CD4-positive, alpha-beta memory T cell (primary cell): ENCODE measurements at regions of chr6 and their contacts with region 1.

Region 1: GRCh38 chr6:2634139-2634964 is 116.4 kb downstream of the MYLK4 start:
- DNase-seq: peak; percentile 65 to 77 (median 75)
- H3K4me3 ChIP-seq: peak overlapping the region in 1 of 2 donors; percentile 49
- H3K4me3 Mint-ChIP-seq: peak overlapping the region; percentile 43 to 85 (median 67)
- H3K27ac ChIP-seq: no peak overlapping the region
- H3K27ac Mint-ChIP-seq: peak overlapping the region in 1 of 7 donors; percentile 30
- H3K4me1 ChIP-seq: no peaks in the 10 kb centered on the region
- H3K4me1 Mint-ChIP-seq: peaks cover 0 to 6% (median 4%) of the 10 kb centered on the region in 4 donors
- H3K27me3 ChIP-seq: no peaks in the 10 kb centered on the region
- H3K27me3 Mint-ChIP-seq: peaks cover 11 to 21% of the 10 kb centered on the region in 2 donors

Region 2: DNA sequence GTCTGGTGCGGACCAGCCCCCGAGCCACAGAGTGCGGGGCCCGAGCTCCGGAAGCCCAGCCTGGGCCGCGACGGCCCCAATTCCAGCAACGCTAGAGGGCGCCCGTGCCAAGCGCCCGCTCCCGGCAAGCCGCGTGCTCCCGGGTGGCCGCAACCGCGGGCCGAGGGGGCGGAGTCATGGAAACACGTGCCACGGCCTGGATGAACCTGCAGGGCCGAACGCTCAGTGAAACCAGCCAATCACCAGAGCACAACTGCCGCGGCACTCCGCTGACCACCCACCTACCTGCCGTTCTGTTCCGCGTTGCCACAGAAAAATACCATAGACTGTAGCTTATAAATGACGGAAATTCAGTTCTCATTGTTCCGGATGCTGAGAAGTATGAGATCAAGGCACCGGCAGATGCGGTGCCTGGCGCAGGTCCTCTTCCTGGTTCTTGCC is 1110.3 kb before region 1 on chr6:
- CTCF ChIA-PET with region 1: interaction called, 16 read pairs
- POLR2A ChIA-PET with region 1: no interaction called
- intact Hi-C with region 1: no loop called
- DNase-seq: peak; percentile 75 to 83 (median 77)
- H3K4me3 ChIP-seq: peak overlapping the region in 1 of 2 donors; percentile 20
- H3K4me3 Mint-ChIP-seq: peak overlapping the region; percentile 75 to 83 (median 80)
- H3K27ac ChIP-seq: peak overlapping the region; percentile 36
- H3K27ac Mint-ChIP-seq: peak overlapping the region; percentile 78 to 93 (median 85)
- H3K4me1 ChIP-seq: peaks cover 51% of the 10 kb centered on the region
- H3K4me1 Mint-ChIP-seq: peaks cover 27 to 55% (median 49%) of the 10 kb centered on the region in 4 donors
- H3K27me3 ChIP-seq: no peaks in the 10 kb centered on the region
- H3K27me3 Mint-ChIP-seq: peaks cover 10% of the 10 kb centered on the region in 2 donors

Region 3: DNA sequence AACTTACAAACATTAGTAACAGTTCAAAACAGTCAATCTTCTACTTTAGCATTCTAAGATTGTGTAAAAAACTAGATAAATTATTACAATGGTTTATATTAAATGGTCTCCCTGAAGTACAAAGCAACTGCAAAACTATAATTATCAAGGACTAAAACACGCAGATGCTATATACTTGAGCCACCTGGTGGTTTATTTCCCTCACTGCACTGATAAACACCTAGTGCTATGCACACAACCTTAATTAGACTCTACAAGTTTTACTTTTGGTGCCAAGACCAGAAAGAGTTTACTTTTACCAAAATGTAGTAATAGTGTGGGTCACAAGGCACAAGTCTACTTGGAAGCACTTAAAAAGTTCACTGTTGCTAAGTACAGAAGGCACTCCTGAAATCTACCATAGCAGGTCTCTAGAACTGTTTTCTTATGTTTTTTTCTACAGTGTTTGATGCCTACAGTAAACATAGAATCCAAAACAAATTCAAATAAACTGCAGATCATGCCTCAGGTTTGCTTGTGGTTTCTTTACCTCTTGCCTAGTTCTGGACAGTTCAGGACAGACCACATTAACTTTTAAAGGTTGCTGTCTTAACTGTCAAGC is 438.2 kb before region 1 on chr6:
- CTCF ChIA-PET with region 1: interaction called, 4 read pairs
- POLR2A ChIA-PET with region 1: no interaction called
- intact Hi-C with region 1: loop called (anchors 1 kb)
- DNase-seq: peak in 4 of 5 donors; percentile 24 to 44 (median 37)
- H3K4me3 ChIP-seq: no peak overlapping the region
- H3K4me3 Mint-ChIP-seq: no peak overlapping the region
- H3K27ac ChIP-seq: no peak overlapping the region
- H3K27ac Mint-ChIP-seq: no peak overlapping the region
- H3K4me1 ChIP-seq: no peaks in the 10 kb centered on the region
- H3K4me1 Mint-ChIP-seq: peaks cover 0 to 2% (median 0%) of the 10 kb centered on the region in 4 donors
- H3K27me3 ChIP-seq: no peaks in the 10 kb centered on the region
- H3K27me3 Mint-ChIP-seq: no peaks in the 10 kb centered on the region

Region 4: DNA sequence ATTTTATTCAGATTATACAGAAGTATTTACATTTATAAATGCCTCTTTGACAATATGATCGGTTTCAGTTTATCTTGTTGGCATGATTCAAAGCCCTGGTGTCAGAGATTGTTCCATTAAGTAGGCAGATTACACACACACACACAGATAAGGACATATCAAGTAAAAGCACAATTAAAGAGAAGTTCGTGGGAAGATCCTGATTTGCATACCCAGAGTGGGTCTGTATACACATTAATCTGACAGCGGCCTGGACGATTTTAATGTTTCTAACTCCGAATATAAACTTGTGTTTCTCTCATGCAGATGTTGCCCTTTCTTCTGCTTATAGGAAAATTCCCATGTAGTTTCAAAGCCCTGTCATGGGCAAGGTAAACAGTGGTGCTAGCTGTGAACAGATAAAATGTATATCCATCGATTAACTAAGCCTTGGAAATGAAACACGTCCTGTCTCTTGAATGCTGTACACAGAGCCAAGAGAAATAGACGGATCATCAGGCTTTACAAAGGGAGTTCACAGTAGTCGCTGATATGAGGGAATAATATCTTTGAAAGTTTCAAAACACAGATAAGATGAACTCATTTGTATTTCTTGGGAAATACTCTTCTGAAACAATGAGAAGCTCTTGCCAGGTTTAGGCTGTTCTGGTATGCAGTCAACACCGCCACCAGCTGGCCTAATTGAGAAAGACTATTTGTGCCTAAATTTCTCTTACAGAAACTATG is 280.8 kb before region 1 on chr6:
- CTCF ChIA-PET with region 1: interaction called, 6 read pairs
- POLR2A ChIA-PET with region 1: no interaction called
- intact Hi-C with region 1: loop called (anchors 2 kb)
- DNase-seq: peak; percentile 26 to 41 (median 31)
- H3K4me3 ChIP-seq: no peak overlapping the region
- H3K4me3 Mint-ChIP-seq: no peak overlapping the region
- H3K27ac ChIP-seq: no peak overlapping the region
- H3K27ac Mint-ChIP-seq: no peak overlapping the region
- H3K4me1 ChIP-seq: no peaks in the 10 kb centered on the region
- H3K4me1 Mint-ChIP-seq: no peaks in the 10 kb centered on the region
- H3K27me3 ChIP-seq: no peaks in the 10 kb centered on the region
- H3K27me3 Mint-ChIP-seq: no peaks in the 10 kb centered on the region

Region 5: DNA sequence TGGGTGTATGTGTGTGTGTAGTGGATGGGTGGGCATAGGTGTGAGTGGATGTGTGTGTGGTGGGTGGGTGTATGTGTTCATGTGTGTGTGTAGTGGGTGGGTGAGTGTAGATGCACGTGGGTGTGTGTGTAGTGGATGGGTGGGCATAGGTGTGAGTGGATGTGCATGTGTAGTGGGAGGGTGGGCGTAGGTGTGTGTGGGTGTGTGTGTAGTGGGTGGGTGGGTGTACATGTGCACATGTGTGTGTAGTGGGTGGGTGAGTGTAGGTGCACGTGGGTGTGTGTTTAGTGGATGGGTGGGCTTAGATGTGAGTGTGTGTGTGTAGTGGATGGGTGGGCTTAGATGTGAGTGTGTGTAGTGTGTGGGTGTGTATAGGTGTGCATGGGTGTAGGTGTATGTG is 12.0 kb after region 1 on chr6:
- CTCF ChIA-PET with region 1: interaction called, 56 read pairs
- POLR2A ChIA-PET with region 1: no interaction called
- intact Hi-C with region 1: no loop called
- DNase-seq: no peak
- H3K4me3 ChIP-seq: no peak overlapping the region
- H3K4me3 Mint-ChIP-seq: no peak overlapping the region
- H3K27ac ChIP-seq: no peak overlapping the region
- H3K27ac Mint-ChIP-seq: no peak overlapping the region
- H3K4me1 ChIP-seq: no peaks in the 10 kb centered on the region
- H3K4me1 Mint-ChIP-seq: no peaks in the 10 kb centered on the region
- H3K27me3 ChIP-seq: peaks cover 11% of the 10 kb centered on the region
- H3K27me3 Mint-ChIP-seq: peaks cover 25 to 37% of the 10 kb centered on the region in 2 donors

Region 6: DNA sequence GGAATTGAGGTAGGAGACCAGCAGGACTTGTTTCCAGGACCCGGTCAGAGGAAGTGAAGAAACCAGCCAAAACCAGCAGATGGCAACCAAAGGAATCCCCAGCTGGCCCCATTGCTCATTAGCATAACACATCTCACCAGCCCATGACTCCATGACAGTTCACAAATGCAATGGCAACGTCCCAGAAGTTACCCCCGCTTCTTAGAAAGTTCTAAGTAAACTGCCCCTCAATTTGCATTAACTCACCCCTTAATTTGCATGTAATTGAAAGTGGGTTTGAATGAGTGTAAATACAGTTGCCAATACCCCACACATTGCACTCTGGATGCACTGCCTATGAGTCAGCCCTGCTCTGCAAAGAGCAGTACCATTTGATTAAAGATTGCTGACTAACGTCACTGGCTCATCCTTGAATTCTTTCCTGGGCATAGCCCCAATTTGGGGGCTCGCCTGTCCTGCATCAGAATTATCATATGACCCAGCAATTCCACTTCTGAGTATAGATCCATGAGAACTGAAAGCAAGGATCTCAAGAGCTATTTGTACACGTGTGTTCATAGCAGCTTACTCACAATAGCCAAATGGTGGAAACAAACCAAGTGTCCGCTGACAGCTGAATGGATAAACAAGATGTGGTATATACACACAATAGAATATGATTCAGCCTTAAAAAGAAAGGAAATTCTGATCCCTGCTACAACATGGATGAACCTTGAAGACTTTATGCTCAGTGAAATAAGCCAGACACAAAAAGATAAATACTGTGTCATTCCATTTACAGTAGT is 80.0 kb after region 1 on chr6:
- CTCF ChIA-PET with region 1: no interaction called
- POLR2A ChIA-PET with region 1: no interaction called
- intact Hi-C with region 1: no loop called
- DNase-seq: no peak
- H3K4me3 ChIP-seq: no peak overlapping the region
- H3K4me3 Mint-ChIP-seq: no peak overlapping the region
- H3K27ac ChIP-seq: no peak overlapping the region
- H3K27ac Mint-ChIP-seq: peak overlapping the region in 1 of 7 donors; percentile 4
- H3K4me1 ChIP-seq: no peaks in the 10 kb centered on the region
- H3K4me1 Mint-ChIP-seq: no peaks in the 10 kb centered on the region
- H3K27me3 ChIP-seq: no peaks in the 10 kb centered on the region
- H3K27me3 Mint-ChIP-seq: peaks cover 5 to 9% of the 10 kb centered on the region in 2 donors